CD8-positive, alpha-beta memory T cell (primary cell): ENCODE measurements at regions of chr7 and their contacts with region 1.

Region 1: DNA sequence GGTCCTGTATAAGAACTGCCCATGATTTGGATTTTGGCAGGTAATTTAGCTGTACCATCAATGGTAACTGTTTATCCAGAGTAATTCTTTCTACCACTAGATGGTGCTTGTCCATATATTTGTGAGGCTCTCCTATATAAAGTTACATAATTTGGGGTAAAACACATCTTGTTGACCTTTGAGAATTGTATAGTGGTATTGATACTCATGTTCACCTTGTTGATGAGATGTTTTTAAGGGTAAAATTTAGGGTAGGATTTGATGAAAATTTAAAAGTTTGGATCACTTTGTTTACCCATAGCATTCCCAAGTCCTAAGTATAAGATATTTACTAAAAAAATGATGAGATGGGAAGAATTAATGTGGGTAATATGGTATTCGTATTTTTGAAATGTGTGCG is 31.6 kb downstream of the ST7 start:
- DNase-seq: peak in 2 of 5 donors; percentile 14 to 48
- H3K4me3 ChIP-seq: no peak overlapping the region
- H3K4me3 Mint-ChIP-seq: no peak overlapping the region
- H3K27ac ChIP-seq: no peak overlapping the region
- H3K27ac Mint-ChIP-seq: no peak overlapping the region
- H3K4me1 ChIP-seq: peaks cover 3% of the 10 kb centered on the region
- H3K4me1 Mint-ChIP-seq: no peaks in the 10 kb centered on the region
- H3K27me3 ChIP-seq: no peaks in the 10 kb centered on the region
- H3K27me3 Mint-ChIP-seq: no peaks in the 10 kb centered on the region

Region 2: GRCh38 chr7:116478834-116479233 is 506.1 kb before region 1 on chr7:
- CTCF ChIA-PET with region 1: no interaction called
- POLR2A ChIA-PET with region 1: no interaction called
- DNase-seq: no peak
- H3K4me3 ChIP-seq: no peak overlapping the region
- H3K4me3 Mint-ChIP-seq: no peak overlapping the region
- H3K27ac ChIP-seq: no peak overlapping the region
- H3K27ac Mint-ChIP-seq: no peak overlapping the region
- H3K4me1 ChIP-seq: no peaks in the 10 kb centered on the region
- H3K4me1 Mint-ChIP-seq: peaks cover 2 to 7% (median 5%) of the 10 kb centered on the region in 3 donors
- H3K27me3 ChIP-seq: no peaks in the 10 kb centered on the region
- H3K27me3 Mint-ChIP-seq: peaks cover 7 to 10% of the 10 kb centered on the region in 2 donors

Region 3: DNA sequence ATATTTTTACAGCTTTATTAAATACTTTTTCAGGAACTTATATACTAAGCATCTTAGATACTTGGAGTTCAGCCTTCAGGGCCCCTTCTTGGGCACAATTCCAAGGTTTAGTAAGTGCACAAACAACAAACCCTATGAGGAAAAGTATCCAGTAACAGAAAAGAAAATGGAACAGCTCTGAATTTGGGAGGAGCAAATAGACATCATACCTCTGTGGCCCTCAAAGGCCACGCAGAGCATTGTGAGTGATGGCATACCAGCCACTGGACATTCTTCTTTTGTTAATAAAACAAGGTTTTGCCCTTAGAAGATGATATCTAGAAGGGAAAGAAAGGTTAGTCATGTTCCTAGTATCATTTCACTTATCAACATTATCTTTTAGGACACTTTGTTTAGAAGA is 14.4 kb after region 1 on chr7:
- CTCF ChIA-PET with region 1: interaction called, 10 read pairs
- POLR2A ChIA-PET with region 1: no interaction called
- DNase-seq: no peak
- H3K4me3 ChIP-seq: no peak overlapping the region
- H3K4me3 Mint-ChIP-seq: no peak overlapping the region
- H3K27ac ChIP-seq: no peak overlapping the region
- H3K27ac Mint-ChIP-seq: no peak overlapping the region
- H3K4me1 ChIP-seq: no peaks in the 10 kb centered on the region
- H3K4me1 Mint-ChIP-seq: no peaks in the 10 kb centered on the region
- H3K27me3 ChIP-seq: no peaks in the 10 kb centered on the region
- H3K27me3 Mint-ChIP-seq: no peaks in the 10 kb centered on the region

Region 4: DNA sequence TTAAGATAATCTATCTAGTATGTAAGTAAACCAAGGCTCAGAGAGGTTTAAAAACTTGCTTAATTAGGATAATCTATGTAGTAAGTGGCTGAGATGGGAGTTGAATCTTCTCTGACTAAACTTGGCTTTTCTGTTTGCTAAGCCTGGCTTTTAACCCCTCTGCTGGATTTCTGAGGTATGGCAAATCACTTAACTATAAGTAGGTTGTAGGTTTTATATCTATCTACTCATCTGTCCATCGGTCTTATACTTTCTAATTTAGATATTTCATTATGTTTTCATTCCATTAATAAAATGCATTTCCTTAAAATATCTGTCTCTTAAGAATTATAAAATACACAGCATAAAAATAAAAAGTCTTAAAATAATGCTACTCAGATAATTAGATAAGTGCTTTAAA is 27.8 kb after region 1 on chr7:
- CTCF ChIA-PET with region 1: interaction called, 10 read pairs
- POLR2A ChIA-PET with region 1: no interaction called
- DNase-seq: peak in 1 of 5 donors; percentile 14
- H3K4me3 ChIP-seq: no peak overlapping the region
- H3K4me3 Mint-ChIP-seq: no peak overlapping the region
- H3K27ac ChIP-seq: no peak overlapping the region
- H3K27ac Mint-ChIP-seq: no peak overlapping the region
- H3K4me1 ChIP-seq: peaks cover 42% of the 10 kb centered on the region
- H3K4me1 Mint-ChIP-seq: peaks cover 60 to 69% (median 68%) of the 10 kb centered on the region in 3 donors
- H3K27me3 ChIP-seq: no peaks in the 10 kb centered on the region
- H3K27me3 Mint-ChIP-seq: peaks cover 0 to 9% of the 10 kb centered on the region in 2 donors

Region 5: GRCh38 chr7:117119192-117119924 is 134.4 kb after region 1 on chr7:
- CTCF ChIA-PET with region 1: interaction called, 52 read pairs
- POLR2A ChIA-PET with region 1: no interaction called
- DNase-seq: peak; percentile 51 to 76 (median 65)
- H3K4me3 ChIP-seq: no peak overlapping the region
- H3K4me3 Mint-ChIP-seq: no peak overlapping the region
- H3K27ac ChIP-seq: no peak overlapping the region
- H3K27ac Mint-ChIP-seq: no peak overlapping the region
- H3K4me1 ChIP-seq: no peaks in the 10 kb centered on the region
- H3K4me1 Mint-ChIP-seq: no peaks in the 10 kb centered on the region
- H3K27me3 ChIP-seq: no peaks in the 10 kb centered on the region
- H3K27me3 Mint-ChIP-seq: no peaks in the 10 kb centered on the region

Region 6: DNA sequence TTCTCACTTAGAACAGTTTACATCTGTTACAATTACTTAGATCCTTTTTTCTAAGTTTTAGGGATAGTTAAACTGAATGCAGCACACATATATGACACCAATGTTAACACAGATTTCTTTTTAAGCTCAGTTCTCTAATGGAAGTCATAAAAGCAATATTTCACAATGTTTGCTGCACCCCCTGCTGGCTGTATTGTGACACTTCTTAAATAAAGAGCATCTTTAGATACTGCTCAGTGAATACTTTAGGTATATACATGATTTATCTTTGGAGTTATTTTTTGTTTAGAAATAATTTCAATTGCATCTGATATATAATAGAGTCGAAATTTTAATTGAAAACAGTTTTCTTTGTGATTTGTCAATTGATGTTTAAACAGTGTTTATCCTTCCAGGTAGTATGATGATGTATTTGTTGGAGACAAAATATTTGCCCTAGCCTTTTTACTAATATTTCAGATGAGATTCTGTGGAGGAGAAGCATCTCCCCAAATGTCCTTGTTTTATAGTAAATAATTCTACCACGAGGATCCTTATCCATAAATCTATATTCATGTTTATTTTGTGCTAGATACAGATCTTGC is 142.8 kb after region 1 on chr7:
- CTCF ChIA-PET with region 1: interaction called, 52 read pairs
- POLR2A ChIA-PET with region 1: no interaction called
- DNase-seq: peak; percentile 20 to 57 (median 26)
- H3K4me3 ChIP-seq: no peak overlapping the region
- H3K4me3 Mint-ChIP-seq: no peak overlapping the region
- H3K27ac ChIP-seq: no peak overlapping the region
- H3K27ac Mint-ChIP-seq: no peak overlapping the region
- H3K4me1 ChIP-seq: no peaks in the 10 kb centered on the region
- H3K4me1 Mint-ChIP-seq: peaks cover 0 to 6% (median 3%) of the 10 kb centered on the region in 3 donors
- H3K27me3 ChIP-seq: no peaks in the 10 kb centered on the region
- H3K27me3 Mint-ChIP-seq: no peaks in the 10 kb centered on the region